ENCODE measurements at regions of chr7 and their contacts with region 1.

Region 1: DNA sequence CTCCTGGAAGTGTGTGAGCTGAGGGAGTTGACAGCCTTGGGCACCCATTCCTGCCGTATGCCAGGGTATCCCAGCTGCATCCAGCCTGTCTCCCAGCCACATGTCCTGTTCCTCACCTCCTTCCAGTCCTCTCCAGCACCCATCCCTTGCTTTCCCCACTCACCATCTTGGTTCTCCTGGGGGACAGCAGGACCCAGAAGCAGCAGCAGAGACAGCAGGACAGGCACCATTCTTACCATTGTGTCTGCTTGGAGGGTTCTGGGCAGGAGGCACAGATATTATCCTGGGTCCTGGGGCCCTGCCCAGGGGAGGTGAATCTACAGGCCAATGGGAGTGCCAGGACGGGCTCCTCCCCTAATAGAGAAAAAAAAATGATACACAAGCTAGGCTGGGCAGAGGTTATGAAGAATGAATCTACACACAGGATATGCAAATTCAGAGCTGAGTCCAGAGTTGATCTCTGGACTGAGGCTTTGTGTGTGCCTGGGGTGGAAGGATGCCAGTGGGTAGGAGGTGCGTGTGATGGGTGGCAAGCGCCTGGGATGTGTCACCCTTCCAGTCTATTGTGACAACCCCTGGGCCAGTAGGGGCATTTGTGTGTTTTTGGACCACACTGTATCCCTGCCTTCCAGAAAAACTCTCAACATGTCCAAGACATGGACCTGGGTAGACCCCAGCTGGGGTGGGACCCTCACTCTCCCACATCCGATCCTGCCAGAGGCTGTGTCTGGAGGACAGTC is at the start of gene AZGP1:
- DNase-seq: peak; percentile 34
- H3K4me3 Mint-ChIP-seq: peak within 1 kb of the TSS; percentile 53
- H3K27ac Mint-ChIP-seq: peak within 1 kb of the TSS; percentile 38
- H3K4me1 Mint-ChIP-seq: peaks cover 28% of the 10 kb centered on the region
- H3K27me3 Mint-ChIP-seq: peaks cover 5% of the 10 kb centered on the region
- CTCF ChIP-seq: no peak
- total RNA-seq, gene AZGP1: 15.4 and 25.6 TPM in 2 replicates

Region 2: DNA sequence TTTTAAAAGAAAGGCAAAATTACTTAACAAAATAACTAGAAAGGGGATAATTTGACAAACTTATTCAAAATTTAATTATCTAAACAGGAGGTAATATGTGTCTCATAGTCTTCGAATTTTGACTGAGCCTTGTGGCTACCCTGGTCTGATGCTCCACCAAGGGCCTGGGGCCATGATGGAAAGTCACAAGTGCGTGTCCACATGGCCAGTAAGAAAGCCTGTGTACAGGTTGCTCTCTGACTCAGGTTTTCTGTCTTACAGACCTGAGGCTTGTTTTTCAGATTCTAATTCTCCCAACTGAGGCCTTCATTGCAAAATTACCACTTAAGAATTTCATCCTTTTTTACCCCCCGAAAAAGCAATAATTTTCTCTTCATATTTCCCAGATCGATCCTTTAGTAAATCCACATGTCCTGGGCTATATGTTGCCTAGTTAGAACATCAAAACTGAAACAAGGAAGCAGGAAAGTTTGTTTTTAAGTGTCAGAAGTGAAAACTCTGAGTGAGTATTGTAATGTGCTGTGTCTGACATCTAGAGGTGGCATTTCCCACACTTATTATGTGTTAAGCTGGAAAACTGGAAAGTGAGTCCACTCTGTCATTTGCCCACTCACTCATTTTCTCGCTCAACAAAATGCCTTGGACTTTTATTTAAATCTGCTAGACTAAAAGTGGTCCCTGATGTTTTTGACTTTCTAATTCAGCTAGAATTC is 138.1 kb before region 1 on chr7:
- CTCF ChIA-PET with region 1: no interaction called
- intact Hi-C with region 1: no loop called
- DNase-seq: no peak
- H3K4me3 Mint-ChIP-seq: peak overlapping the region; percentile 16
- H3K27ac Mint-ChIP-seq: peak overlapping the region; percentile 15
- H3K4me1 Mint-ChIP-seq: peaks cover 17% of the 10 kb centered on the region
- H3K27me3 Mint-ChIP-seq: no peaks in the 10 kb centered on the region
- CTCF ChIP-seq: no peak

Region 3: DNA sequence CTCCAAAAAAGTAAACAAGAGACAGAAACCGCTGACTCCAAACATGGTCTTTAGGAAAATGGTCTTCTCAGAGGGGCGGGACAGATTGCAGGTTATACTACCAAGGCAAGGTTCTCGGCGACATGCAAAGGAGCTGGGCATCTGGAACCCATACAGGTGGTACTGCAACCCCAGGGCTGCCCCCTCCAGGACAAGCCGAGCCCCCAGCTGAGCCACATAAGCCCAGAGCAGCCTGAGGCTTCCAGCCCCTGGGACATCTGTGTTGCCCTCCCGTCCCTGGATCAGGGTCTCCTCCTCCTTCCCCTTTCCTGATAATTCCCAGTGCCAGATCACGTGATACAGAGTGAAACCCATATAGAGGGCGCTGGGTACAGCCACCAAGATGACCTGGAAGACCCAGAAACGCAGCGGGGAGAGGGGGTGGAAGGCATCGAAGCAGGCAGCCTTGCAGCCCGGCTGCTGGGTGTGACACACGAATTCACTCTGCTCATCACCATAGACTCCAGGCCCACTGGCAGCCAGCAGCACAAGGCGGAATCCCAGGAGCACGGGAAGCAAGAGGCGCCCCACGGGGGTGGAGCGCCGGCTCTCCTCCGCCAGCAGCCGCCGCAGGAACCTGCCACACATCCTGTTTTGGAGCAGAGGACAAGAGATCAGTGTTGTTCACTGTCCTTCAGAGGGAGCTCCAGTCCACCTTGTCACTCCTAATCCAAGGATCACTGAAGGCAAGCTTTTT is 46.8 kb before region 1 on chr7 and contains the start of gene GJC3:
- CTCF ChIA-PET with region 1: interaction called, 3 read pairs
- intact Hi-C with region 1: loop called (anchors 2 kb)
- DNase-seq: peak; percentile 51
- H3K4me3 Mint-ChIP-seq: peak within 1 kb of the TSS; percentile 67
- H3K27ac Mint-ChIP-seq: peak within 1 kb of the TSS; percentile 35
- H3K4me1 Mint-ChIP-seq: peaks cover 6% of the 10 kb centered on the region
- H3K27me3 Mint-ChIP-seq: peaks cover 51% of the 10 kb centered on the region
- CTCF ChIP-seq: no peak
- total RNA-seq, gene GJC3: not detected in 2 replicates

Measured in Calu3 (cell line).